Endothelial cell of umbilical vein (primary cell): ENCODE measurements at regions of chr2 and their contacts with region 1.

Region 1: DNA sequence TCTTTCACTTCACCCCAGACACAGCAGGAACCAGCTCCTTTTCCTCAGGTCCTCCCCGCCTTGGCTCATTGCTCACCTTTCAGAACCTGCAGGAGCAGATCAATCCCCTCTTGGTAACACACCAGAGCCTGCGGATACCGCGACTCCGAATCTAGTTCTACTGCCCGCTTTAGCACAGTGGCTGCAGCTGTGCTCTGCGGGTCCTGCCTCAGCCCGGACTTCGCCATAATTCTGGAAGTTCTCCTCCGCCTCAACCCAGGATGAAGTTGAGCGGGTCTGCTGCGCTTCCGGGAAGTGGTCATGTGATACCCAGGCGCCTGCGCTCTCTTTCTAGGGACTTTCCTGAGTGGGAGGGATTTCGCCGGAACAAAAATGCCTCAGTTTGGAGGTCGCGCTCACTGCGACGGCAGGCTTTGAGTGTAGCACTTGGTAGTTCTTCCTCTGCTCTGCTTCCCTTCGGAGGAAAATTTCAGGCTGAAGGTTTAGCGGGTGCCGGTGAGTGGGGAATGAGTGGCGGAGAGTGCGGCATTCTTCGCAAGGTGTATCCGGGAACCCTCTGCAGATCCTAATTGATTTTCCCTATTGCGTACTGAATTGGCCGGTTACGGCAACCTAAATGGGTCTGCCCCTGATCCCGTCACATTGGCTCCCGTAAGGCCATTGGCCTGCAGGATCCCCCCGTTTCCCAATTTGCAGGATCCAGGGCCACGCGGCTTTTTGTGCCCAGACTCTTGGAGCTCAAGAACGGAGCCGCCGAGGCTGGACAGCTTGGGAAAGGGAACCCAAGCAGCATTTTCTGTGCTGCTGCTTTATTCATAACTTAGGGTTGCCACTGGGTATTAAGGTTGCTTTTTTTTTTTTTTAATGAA is at the starts of genes MITD1 and MRPL30:
- DNase-seq: peak; percentile 99
- H3K4me3 ChIP-seq: peak within 1 kb of the TSS; percentile 67 to 93 (median 74)
- H3K27ac ChIP-seq: peak within 1 kb of the TSS; percentile 48
- H3K4me1 ChIP-seq: peaks cover 17% of the 10 kb centered on the region
- H3K27me3 ChIP-seq: no peaks in the 10 kb centered on the region
- CTCF ChIP-seq: no peak
- POLR2A ChIP-seq: peak; percentile 80
- total RNA-seq, gene MITD1: 29.8 and 30.0 TPM in 2 replicates
- total RNA-seq, gene MRPL30: 28.4 and 30.7 TPM in 2 replicates

Region 2: GRCh38 chr2:99337113-99338028 is 156.4 kb after region 1 on chr2 and contains the start of gene EIF5B:
- CTCF ChIA-PET with region 1: interaction called, 3 read pairs
- POLR2A ChIA-PET with region 1: interaction called, 4 read pairs
- dilution Hi-C with region 1: no loop called
- intact Hi-C with region 1: loop called (anchors 1 kb)
- DNase-seq: peak; percentile 98
- H3K4me3 ChIP-seq: peak within 1 kb of the TSS; percentile 89 to 96 (median 91)
- H3K27ac ChIP-seq: peak within 1 kb of the TSS; percentile 68
- H3K4me1 ChIP-seq: peaks cover 20% of the 10 kb centered on the region
- H3K27me3 ChIP-seq: no peaks in the 10 kb centered on the region
- CTCF ChIP-seq: peak; percentile 57 to 75
- POLR2A ChIP-seq: peak; percentile 89
- total RNA-seq, gene EIF5B: 53.5 and 54.5 TPM in 2 replicates